ENCODE measurements at regions of chr10 and their contacts with region 1.

Region 1: GRCh38 chr10:113385021-113385999 is 167.5 kb upstream of the HABP2 start:
- DNase-seq: peak; percentile 24 to 81 (median 49)
- ATAC-seq: peak; percentile 82 to 94 (median 84)
- H3K4me3 ChIP-seq: no peak overlapping the region
- H3K4me3 Mint-ChIP-seq: peak overlapping the region; percentile 22 to 39 (median 26)
- H3K27ac ChIP-seq: no peak overlapping the region
- H3K27ac Mint-ChIP-seq: peak overlapping the region; percentile 29 to 73
- H3K4me1 ChIP-seq: peaks cover 9 to 16% of the 10 kb centered on the region in 2 experiments
- H3K4me1 Mint-ChIP-seq: peaks cover 28 to 34% (median 32%) of the 10 kb centered on the region in 3 donors
- H3K27me3 ChIP-seq: peaks cover 0 to 9% of the 10 kb centered on the region in 2 experiments
- H3K27me3 Mint-ChIP-seq: no peaks in the 10 kb centered on the region

Region 2: DNA sequence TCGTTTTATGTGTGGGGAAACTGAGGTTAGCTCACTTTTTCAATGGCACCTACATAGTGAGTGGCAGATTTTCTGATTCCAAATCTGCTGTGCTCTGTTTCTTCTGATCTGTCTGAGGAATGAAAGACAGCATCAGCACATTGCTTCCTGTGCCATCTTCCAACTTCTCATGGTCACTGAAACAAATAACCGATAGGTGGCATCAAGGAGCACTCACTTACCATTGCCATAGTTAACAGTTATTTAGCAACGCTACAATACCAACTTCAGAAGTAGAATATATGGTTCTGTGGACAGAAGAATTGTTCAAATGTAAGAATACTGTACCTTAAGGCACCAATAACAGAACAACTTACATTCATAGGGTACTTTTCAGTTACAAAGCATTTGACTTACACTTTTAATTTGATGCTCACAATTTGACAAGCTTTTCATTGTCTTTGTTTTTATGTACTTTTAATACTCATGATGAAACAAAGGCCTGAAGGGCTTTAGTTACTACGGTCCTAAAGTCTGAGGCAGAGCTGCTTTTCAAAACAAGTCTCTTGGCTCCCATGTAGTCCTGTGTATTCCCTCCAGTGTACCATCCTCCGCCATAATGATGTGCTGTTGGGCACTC is 664.1 kb before region 1 on chr10:
- CTCF ChIA-PET with region 1: interaction called, 14 to 18 read pairs
- POLR2A ChIA-PET with region 1: no interaction called
- DNase-seq: peak in 6 of 35 experiments; percentile 1 to 58 (median 6)
- ATAC-seq: peak in 1 of 4 experiments; percentile 57
- H3K4me3 ChIP-seq: no peak overlapping the region
- H3K4me3 Mint-ChIP-seq: no peak overlapping the region
- H3K27ac ChIP-seq: no peak overlapping the region
- H3K27ac Mint-ChIP-seq: no peak overlapping the region
- H3K4me1 ChIP-seq: no peaks in the 10 kb centered on the region
- H3K4me1 Mint-ChIP-seq: no peaks in the 10 kb centered on the region
- H3K27me3 ChIP-seq: no peaks in the 10 kb centered on the region
- H3K27me3 Mint-ChIP-seq: no peaks in the 10 kb centered on the region

Region 3: GRCh38 chr10:113162960-113163359 is 222.3 kb before region 1 on chr10:
- CTCF ChIA-PET with region 1: no interaction called
- POLR2A ChIA-PET with region 1: interaction called in 1 of 2 experiments, 12 read pairs
- DNase-seq: no peak
- ATAC-seq: no peak
- H3K4me3 ChIP-seq: no peak overlapping the region
- H3K4me3 Mint-ChIP-seq: no peak overlapping the region
- H3K27ac ChIP-seq: no peak overlapping the region
- H3K27ac Mint-ChIP-seq: no peak overlapping the region
- H3K4me1 ChIP-seq: no peaks in the 10 kb centered on the region
- H3K4me1 Mint-ChIP-seq: no peaks in the 10 kb centered on the region
- H3K27me3 ChIP-seq: no peaks in the 10 kb centered on the region
- H3K27me3 Mint-ChIP-seq: no peaks in the 10 kb centered on the region

Region 4: GRCh38 chr10:113335592-113335991 is 49.7 kb before region 1 on chr10:
- CTCF ChIA-PET with region 1: no interaction called
- POLR2A ChIA-PET with region 1: no interaction called
- DNase-seq: no peak
- ATAC-seq: no peak
- H3K4me3 ChIP-seq: no peak overlapping the region
- H3K4me3 Mint-ChIP-seq: no peak overlapping the region
- H3K27ac ChIP-seq: no peak overlapping the region
- H3K27ac Mint-ChIP-seq: no peak overlapping the region
- H3K4me1 ChIP-seq: no peaks in the 10 kb centered on the region
- H3K4me1 Mint-ChIP-seq: no peaks in the 10 kb centered on the region
- H3K27me3 ChIP-seq: no peaks in the 10 kb centered on the region
- H3K27me3 Mint-ChIP-seq: peaks cover 3 to 5% of the 10 kb centered on the region in 2 donors